Activated CD4-positive, alpha-beta T cell treated with anti-CD3 and anti-CD28 coated beads, Interleukin-2, amount 10 ng/mL, durations not matched to agents 7 days and 5 days (primary cell): ENCODE measurements at regions of chr16 and their contacts with region 1.

Region 1: GRCh38 chr16:12079412-12079965 is 103.0 kb downstream of the SNX29 start:
- DNase-seq: peak; percentile 33
- H3K4me3 Mint-ChIP-seq: peak overlapping the region; percentile 64
- H3K27ac Mint-ChIP-seq: peak overlapping the region; percentile 97
- H3K4me1 Mint-ChIP-seq: peaks cover 85% of the 10 kb centered on the region
- H3K27me3 Mint-ChIP-seq: no peaks in the 10 kb centered on the region

Region 2: DNA sequence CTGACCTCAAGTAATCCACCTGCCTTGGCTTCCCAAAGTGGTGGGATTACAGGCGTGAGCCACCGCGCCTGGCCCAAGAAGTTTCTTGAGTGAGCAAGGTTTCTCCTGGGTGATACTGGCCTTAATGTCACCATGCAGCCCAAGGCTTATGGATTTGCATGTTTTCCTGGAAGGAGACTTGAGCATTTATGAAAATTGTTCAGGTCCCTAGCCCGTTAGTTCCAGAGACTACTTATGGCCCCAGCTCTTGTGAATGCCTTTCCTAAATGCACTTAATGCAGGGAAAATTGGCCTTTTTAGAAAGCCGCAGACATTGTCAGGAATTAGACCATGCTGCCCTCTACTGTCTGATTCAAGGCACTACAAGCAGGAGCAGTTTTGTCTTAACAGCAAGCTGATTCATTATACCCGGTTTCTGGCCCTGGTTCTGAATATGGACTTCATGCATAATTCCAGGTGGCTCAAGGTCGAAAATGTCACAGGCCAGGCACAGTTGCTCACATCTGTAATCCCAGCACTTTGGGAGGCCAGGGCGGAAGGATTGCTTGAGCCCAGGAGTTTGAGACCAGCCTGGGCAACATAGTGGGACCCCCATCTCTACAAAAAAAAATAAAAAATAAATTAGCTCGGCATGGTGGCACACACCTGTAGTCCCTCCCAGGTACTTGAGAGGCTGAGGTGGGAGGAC is 11.6 kb before region 1 on chr16:
- CTCF ChIA-PET with region 1: interaction called, 24 read pairs
- POLR2A ChIA-PET with region 1: no interaction called
- DNase-seq: peak; percentile 74
- H3K4me3 Mint-ChIP-seq: no peak overlapping the region
- H3K27ac Mint-ChIP-seq: no peak overlapping the region
- H3K4me1 Mint-ChIP-seq: peaks cover 6% of the 10 kb centered on the region
- H3K27me3 Mint-ChIP-seq: no peaks in the 10 kb centered on the region

Region 3: GRCh38 chr16:12095275-12096156 is 16.0 kb after region 1 on chr16:
- CTCF ChIA-PET with region 1: interaction called, 10 read pairs
- POLR2A ChIA-PET with region 1: no interaction called
- DNase-seq: peak; percentile 70
- H3K4me3 Mint-ChIP-seq: peak overlapping the region; percentile 6
- H3K27ac Mint-ChIP-seq: no peak overlapping the region
- H3K4me1 Mint-ChIP-seq: peaks cover 15% of the 10 kb centered on the region
- H3K27me3 Mint-ChIP-seq: no peaks in the 10 kb centered on the region